SK-N-SH (cell line): ENCODE measurements at regions of chr6 and their contacts with region 1.

Region 1: DNA sequence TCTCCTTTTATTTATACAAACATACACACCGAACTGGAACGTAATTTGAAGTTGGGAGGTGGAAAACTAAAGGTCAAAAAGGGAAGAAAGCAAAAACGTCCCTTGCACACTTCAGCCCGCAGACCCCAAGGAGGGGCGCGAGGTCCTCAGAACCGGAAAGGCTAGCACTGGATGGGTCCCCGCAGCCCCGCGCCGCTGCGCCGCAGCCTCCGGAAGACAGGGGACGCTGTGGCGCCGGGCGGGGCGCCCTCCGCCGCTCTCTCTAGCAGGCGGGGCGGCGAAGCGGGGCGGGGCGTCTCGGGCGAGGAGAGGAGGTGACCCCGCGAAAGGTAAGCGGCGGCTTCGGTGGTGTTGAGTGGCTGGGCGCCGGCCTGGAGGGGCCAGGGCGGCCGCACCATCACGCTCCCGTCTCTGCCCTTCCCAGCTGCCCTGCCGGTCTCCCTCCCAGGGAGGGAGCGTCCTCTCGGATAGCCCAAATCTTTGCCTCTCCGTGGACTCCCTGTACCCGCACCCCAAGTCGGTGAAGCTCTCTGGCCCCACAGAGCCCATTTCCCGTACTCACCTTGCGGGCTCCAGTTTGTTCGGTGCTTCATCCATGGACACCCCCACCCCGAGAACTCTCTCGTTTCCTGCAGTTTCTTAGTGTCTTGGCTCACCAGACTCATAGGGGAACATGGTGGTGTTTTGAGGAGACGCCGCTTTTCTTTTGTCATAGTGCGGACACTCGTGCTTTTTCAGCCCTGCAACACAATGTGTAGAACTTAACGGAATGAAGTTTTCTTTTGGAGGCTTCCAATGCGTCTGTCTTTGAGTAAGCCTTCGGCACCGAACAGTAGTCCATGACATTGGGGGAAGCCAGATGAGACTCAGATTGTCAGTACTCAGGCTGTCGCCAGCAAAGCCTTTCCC is at the start of gene SMIM8:
- DNase-seq: peak; percentile 96
- H3K4me3 ChIP-seq: peak within 1 kb of the TSS; percentile 91 to 98
- H3K27ac ChIP-seq: peak within 1 kb of the TSS in 1 of 2 experiments; percentile 66; a peak in 3 of 4 replicates
- H3K4me1 ChIP-seq: no peaks in the 10 kb centered on the region; a peak in 1 of 4 replicates
- H3K27me3 ChIP-seq: no peaks in the 10 kb centered on the region
- CTCF ChIP-seq: peak; percentile 93
- EP300 ChIP-seq: peak in 1 of 2 experiments; percentile 20; a peak in 1 of 4 replicates
- RAD21 ChIP-seq: peak; percentile 49
- polyA plus RNA-seq, gene SMIM8: 1.6 and 3.1 TPM in 2 replicates

Region 2: DNA sequence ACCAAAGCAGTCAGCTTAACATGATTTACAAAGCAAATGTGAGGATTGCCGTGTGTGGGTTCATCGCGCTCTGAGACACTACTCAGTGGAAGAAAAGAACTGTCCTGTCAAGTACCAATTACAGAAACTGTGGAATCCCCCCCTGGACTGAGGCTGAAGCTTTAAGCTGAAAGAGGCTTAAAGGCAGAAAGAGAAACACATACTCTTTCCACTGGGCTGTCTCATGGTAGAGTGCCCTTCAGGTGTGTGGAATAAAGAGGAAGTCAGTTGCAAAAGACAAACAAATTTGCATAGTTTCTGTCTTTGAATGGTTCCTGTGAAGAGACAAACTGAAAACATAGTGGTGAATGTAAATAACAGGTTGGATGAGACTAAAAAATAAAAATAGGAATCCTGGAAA is 1119.5 kb before region 1 on chr6:
- CTCF ChIA-PET with region 1: no interaction called
- POLR2A ChIA-PET with region 1: no interaction called
- DNase-seq: no peak
- H3K4me3 ChIP-seq: no peak overlapping the region
- H3K27ac ChIP-seq: no peak overlapping the region
- H3K4me1 ChIP-seq: no peaks in the 10 kb centered on the region
- H3K27me3 ChIP-seq: no peaks in the 10 kb centered on the region
- CTCF ChIP-seq: no peak
- EP300 ChIP-seq: no peak
- RAD21 ChIP-seq: no peak

Region 3: GRCh38 chr6:87297115-87297514 is 25.4 kb before region 1 on chr6:
- CTCF ChIA-PET with region 1: interaction called, 11 read pairs
- POLR2A ChIA-PET with region 1: no interaction called
- DNase-seq: no peak
- H3K4me3 ChIP-seq: no peak overlapping the region
- H3K27ac ChIP-seq: no peak overlapping the region
- H3K4me1 ChIP-seq: no peaks in the 10 kb centered on the region
- H3K27me3 ChIP-seq: no peaks in the 10 kb centered on the region
- CTCF ChIP-seq: no peak
- EP300 ChIP-seq: no peak
- RAD21 ChIP-seq: no peak

Region 4: DNA sequence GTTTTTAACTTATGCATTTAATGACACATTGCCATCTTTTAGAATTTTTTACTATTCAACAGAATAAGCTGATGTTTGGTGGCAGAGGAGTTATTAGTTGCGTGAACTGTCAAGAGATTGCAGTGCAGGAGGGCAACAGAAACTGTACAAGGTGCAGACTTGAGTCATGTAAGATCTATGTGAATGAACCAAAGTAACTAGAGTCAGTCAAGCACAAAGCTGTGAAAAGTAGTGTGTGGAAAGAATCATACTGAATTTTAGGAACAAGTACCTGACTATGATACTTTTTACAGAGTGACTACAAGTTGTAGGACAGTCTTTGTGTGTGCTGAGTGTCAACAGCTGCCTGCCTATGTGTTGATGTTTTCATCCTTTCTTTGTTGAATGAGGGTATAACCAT is 19.3 kb after region 1 on chr6:
- CTCF ChIA-PET with region 1: interaction called, 13 read pairs
- POLR2A ChIA-PET with region 1: no interaction called
- DNase-seq: no peak
- H3K4me3 ChIP-seq: no peak overlapping the region
- H3K27ac ChIP-seq: no peak overlapping the region
- H3K4me1 ChIP-seq: no peaks in the 10 kb centered on the region
- H3K27me3 ChIP-seq: no peaks in the 10 kb centered on the region
- CTCF ChIP-seq: no peak
- EP300 ChIP-seq: no peak
- RAD21 ChIP-seq: no peak